Posterior vena cava (tissue), 2 donors: ENCODE measurements at regions of chr11 and their contacts with region 1.

Region 1: GRCh38 chr11:45259592-45259991 is 26.5 kb downstream of the SYT13 start:
- DNase-seq: no peak

Region 2: GRCh38 chr11:45209891-45210699 is 49.5 kb before region 1 on chr11:
- intact Hi-C with region 1: loop called in 1 of 2 experiments (anchors 1 kb)
- DNase-seq: peak; percentile 94